ENCODE measurements at regions of chr5 and their contacts with region 1.

Region 1: GRCh38 chr5:103139264-103139865 is 19.3 kb downstream of the PPIP5K2 start:
- DNase-seq: peak; percentile 50
- ATAC-seq: peak; percentile 87
- H3K4me3 Mint-ChIP-seq: no peak overlapping the region
- H3K27ac Mint-ChIP-seq: no peak overlapping the region
- H3K4me1 Mint-ChIP-seq: no peaks in the 10 kb centered on the region
- H3K27me3 Mint-ChIP-seq: no peaks in the 10 kb centered on the region
- CTCF ChIP-seq: peak; percentile 85

Region 2: GRCh38 chr5:102536323-102536928 is 602.9 kb before region 1 on chr5:
- CTCF ChIA-PET with region 1: interaction called, 9 read pairs
- POLR2A ChIA-PET with region 1: no interaction called
- intact Hi-C with region 1: loop called (anchors 1 kb)
- DNase-seq: no peak
- ATAC-seq: no peak
- H3K4me3 Mint-ChIP-seq: no peak overlapping the region
- H3K27ac Mint-ChIP-seq: no peak overlapping the region
- H3K4me1 Mint-ChIP-seq: peaks cover 2% of the 10 kb centered on the region
- H3K27me3 Mint-ChIP-seq: no peaks in the 10 kb centered on the region
- CTCF ChIP-seq: no peak

Region 3: GRCh38 chr5:102583276-102584124 is 555.9 kb before region 1 on chr5:
- CTCF ChIA-PET with region 1: interaction called, 8 read pairs
- POLR2A ChIA-PET with region 1: no interaction called
- intact Hi-C with region 1: loop called (anchors 1 kb)
- DNase-seq: no peak
- ATAC-seq: no peak
- H3K4me3 Mint-ChIP-seq: no peak overlapping the region
- H3K27ac Mint-ChIP-seq: no peak overlapping the region
- H3K4me1 Mint-ChIP-seq: peaks cover 1% of the 10 kb centered on the region
- H3K27me3 Mint-ChIP-seq: no peaks in the 10 kb centered on the region
- CTCF ChIP-seq: peak; percentile 32

Region 4: GRCh38 chr5:102681407-102681983 is 457.9 kb before region 1 on chr5:
- CTCF ChIA-PET with region 1: interaction called, 16 read pairs
- POLR2A ChIA-PET with region 1: no interaction called
- intact Hi-C with region 1: loop called (anchors 1 kb)
- DNase-seq: no peak
- ATAC-seq: peak; percentile 31
- H3K4me3 Mint-ChIP-seq: no peak overlapping the region
- H3K27ac Mint-ChIP-seq: no peak overlapping the region
- H3K4me1 Mint-ChIP-seq: no peaks in the 10 kb centered on the region
- H3K27me3 Mint-ChIP-seq: no peaks in the 10 kb centered on the region
- CTCF ChIP-seq: no peak

Region 5: GRCh38 chr5:102778478-102778877 is 360.9 kb before region 1 on chr5:
- CTCF ChIA-PET with region 1: interaction called, 29 read pairs
- POLR2A ChIA-PET with region 1: no interaction called
- intact Hi-C with region 1: loop called (anchors 1 kb)
- DNase-seq: no peak
- ATAC-seq: no peak
- H3K4me3 Mint-ChIP-seq: no peak overlapping the region
- H3K27ac Mint-ChIP-seq: no peak overlapping the region
- H3K4me1 Mint-ChIP-seq: peaks cover 6% of the 10 kb centered on the region
- H3K27me3 Mint-ChIP-seq: no peaks in the 10 kb centered on the region
- CTCF ChIP-seq: no peak

Region 6: DNA sequence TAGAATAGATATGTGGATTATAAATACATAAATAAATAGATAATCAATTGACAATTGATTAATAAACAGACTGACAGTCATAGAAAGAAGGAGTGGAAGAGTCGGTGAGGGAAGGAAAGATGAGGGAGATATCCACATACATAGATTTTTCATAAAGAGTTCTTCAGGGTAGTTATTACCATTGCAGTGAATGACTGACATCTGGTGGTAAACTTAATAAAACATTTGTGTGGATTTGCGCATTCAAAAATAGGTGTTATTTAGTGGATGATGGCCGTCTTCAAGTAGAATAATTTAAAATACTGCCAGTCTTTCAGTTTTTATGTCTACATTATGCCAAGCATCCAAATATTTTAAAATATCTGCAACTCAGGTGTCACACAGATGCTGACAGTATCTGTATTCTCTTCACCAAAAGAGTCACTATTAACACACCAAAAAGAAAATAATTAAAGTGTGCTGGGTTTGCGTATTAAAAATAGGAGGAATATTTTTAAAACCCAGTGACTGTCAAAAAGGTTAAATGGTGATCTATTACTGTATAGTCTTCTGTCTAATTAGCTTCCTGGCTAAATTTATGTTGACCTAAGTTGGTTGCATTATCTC is 98.2 kb before region 1 on chr5:
- CTCF ChIA-PET with region 1: no interaction called
- POLR2A ChIA-PET with region 1: no interaction called
- intact Hi-C with region 1: loop called (anchors 1 kb)
- DNase-seq: no peak
- ATAC-seq: no peak
- H3K4me3 Mint-ChIP-seq: no peak overlapping the region
- H3K27ac Mint-ChIP-seq: no peak overlapping the region
- H3K4me1 Mint-ChIP-seq: no peaks in the 10 kb centered on the region
- H3K27me3 Mint-ChIP-seq: no peaks in the 10 kb centered on the region
- CTCF ChIP-seq: no peak